ENCODE measurements at regions of chr4 and their contacts with region 1.

Region 1: DNA sequence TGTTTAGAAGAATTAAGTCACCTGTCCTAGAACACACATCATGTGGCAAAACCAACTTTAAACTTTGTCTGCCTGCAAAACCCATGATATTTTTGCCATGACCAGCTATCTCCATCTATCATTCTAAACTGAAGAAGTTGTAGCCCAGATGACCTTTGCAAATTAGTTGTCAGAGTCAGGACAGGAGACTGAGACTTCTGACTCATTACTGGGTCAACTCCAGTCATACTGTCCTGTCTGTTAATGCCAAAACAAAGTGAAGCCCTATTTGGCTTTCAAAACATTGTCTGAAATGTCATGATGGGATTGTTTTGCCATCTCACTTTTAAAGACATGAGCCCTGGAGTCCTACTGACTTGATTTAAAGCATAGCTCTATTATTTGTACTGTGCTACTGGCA is 365.7 kb upstream of the CPEB2 start:
- DNase-seq: no peak
- H3K4me3 ChIP-seq: no peak overlapping the region
- H3K27ac ChIP-seq: peak overlapping the region; percentile 75
- H3K4me1 ChIP-seq: peaks cover 37% of the 10 kb centered on the region
- H3K27me3 ChIP-seq: no peaks in the 10 kb centered on the region
- CTCF ChIP-seq: no peak

Region 2: DNA sequence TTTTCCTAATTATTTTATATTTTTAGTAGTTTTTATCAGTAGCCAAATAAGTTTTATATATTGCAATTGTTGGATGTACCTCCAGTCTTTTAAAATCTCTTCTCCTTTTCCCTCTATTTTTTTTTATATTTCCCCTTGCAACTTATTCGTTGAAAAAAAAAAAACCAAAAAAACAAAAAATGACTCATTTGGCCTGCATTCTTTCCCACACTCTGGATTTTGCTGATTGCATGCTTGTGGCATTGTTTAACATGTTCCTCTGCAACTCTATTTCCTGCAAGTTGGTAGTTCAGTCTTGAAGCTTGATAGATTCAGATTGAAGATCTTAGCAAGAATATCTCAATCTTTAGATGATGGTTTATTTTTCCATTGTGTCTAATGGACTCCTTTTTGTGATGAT is 748.5 kb before region 1 on chr4:
- CTCF ChIA-PET with region 1: no interaction called
- POLR2A ChIA-PET with region 1: no interaction called
- intact Hi-C with region 1: loop called (anchors 10 kb)
- DNase-seq: peak; percentile 23
- H3K4me3 ChIP-seq: no peak overlapping the region
- H3K27ac ChIP-seq: no peak overlapping the region
- H3K4me1 ChIP-seq: peaks cover 5% of the 10 kb centered on the region
- H3K27me3 ChIP-seq: no peaks in the 10 kb centered on the region
- CTCF ChIP-seq: no peak

Region 3: GRCh38 chr4:14404730-14405129 is 231.8 kb before region 1 on chr4:
- CTCF ChIA-PET with region 1: no interaction called
- POLR2A ChIA-PET with region 1: interaction called, 24 read pairs
- intact Hi-C with region 1: no loop called
- DNase-seq: no peak
- H3K4me3 ChIP-seq: no peak overlapping the region
- H3K27ac ChIP-seq: no peak overlapping the region
- H3K4me1 ChIP-seq: peaks cover 15% of the 10 kb centered on the region
- H3K27me3 ChIP-seq: no peaks in the 10 kb centered on the region
- CTCF ChIP-seq: no peak

Region 4: DNA sequence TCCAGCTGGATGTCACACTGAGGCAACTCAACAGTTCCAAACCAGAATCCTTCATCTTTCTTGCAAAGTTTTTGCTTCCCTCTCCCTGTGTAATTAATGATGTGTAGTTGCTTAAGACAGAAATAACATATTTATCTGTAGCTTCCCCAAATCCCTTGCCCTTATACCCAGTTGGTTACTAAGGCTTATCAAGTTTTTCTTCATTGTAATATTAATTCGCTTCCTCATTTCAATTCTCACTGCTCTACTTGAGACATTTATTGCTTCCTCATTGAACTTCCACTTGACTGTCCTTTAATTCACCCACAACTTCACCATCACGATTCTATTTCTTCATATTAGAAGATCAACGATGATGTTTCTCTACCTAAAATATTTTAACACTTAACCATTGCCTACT is 20.9 kb before region 1 on chr4:
- CTCF ChIA-PET with region 1: no interaction called
- POLR2A ChIA-PET with region 1: no interaction called
- intact Hi-C with region 1: no loop called
- DNase-seq: no peak
- H3K4me3 ChIP-seq: no peak overlapping the region
- H3K27ac ChIP-seq: no peak overlapping the region
- H3K4me1 ChIP-seq: peaks cover 3% of the 10 kb centered on the region
- H3K27me3 ChIP-seq: no peaks in the 10 kb centered on the region
- CTCF ChIP-seq: no peak

Region 5: DNA sequence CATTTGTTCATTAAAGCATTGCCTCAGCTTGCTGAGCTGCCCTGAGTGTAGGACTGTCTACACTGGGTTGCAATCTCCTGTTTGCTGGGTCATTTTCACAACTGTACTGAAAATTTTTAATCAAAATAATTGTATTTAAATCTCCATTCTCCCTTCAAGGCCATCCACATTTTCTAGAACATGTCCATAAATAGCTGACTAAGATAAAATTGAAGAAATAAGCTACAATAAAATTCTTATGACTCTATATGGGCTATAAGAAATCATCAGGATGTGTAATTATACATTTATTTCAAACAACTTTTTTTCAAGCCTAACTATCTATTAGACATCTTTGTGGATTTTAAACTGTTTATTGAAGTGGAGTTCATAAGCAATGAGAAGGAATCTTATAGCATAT is 93.0 kb after region 1 on chr4:
- CTCF ChIA-PET with region 1: no interaction called
- POLR2A ChIA-PET with region 1: no interaction called
- intact Hi-C with region 1: no loop called
- DNase-seq: no peak
- H3K4me3 ChIP-seq: no peak overlapping the region
- H3K27ac ChIP-seq: no peak overlapping the region
- H3K4me1 ChIP-seq: no peaks in the 10 kb centered on the region
- H3K27me3 ChIP-seq: no peaks in the 10 kb centered on the region
- CTCF ChIP-seq: no peak

Measured in A673 (cell line).